ENCODE measurements at regions of chr10 and their contacts with region 1.

Region 1: GRCh38 chr10:79347226-79347893 is at the start of gene PPIF:
- DNase-seq: peak; percentile 95
- CTCF ChIP-seq: peak; percentile 96

Region 2: GRCh38 chr10:79322616-79323543 is 24.5 kb before region 1 on chr10:
- CTCF ChIA-PET with region 1: interaction called, 90 read pairs
- POLR2A ChIA-PET with region 1: interaction called, 5 read pairs
- DNase-seq: no peak
- CTCF ChIP-seq: no peak

Region 3: DNA sequence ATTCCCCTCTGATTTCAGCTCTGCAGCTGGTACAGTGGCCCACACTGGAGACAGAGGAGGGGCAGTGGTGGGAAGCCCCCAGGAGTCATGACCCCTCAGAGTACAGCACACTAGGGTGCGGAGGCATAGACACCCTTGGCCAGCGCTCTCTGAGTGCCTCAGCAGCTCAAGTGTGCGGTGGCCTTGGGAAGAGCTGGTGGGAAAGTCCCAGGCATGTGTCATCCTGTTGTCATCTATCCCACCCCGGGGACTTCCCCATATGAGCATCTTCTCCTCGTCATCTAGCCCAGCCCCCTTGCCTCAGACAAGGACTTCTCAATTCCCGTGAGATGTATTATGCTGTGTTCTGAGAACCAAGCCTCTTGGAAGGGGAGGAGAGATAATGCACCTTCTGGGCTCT is 15.7 kb before region 1 on chr10:
- CTCF ChIA-PET with region 1: interaction called, 90 read pairs
- POLR2A ChIA-PET with region 1: interaction called, 5 read pairs
- DNase-seq: peak; percentile 83
- CTCF ChIP-seq: no peak

Region 4: GRCh38 chr10:79358783-79359182 is 11.4 kb after region 1 on chr10:
- CTCF ChIA-PET with region 1: interaction called, 12 read pairs
- POLR2A ChIA-PET with region 1: interaction called, 3 read pairs
- DNase-seq: peak; percentile 29
- CTCF ChIP-seq: no peak

Measured in GM10248 (cell line).